Head of caudate nucleus (tissue), 42 donors: ENCODE measurements at regions of chr1 and their contacts with region 1.

Region 1: GRCh38 chr1:113811888-113812660 is at the start of gene RSBN1:
- DNase-seq: peak; percentile 97 to 100 (median 99)

Region 2: GRCh38 chr1:113759333-113760101 is 52.6 kb before region 1 on chr1 and contains the start of gene PHTF1:
- intact Hi-C with region 1: loop called (anchors 5 kb)
- DNase-seq: peak; percentile 37 to 82 (median 60)

Region 3: DNA sequence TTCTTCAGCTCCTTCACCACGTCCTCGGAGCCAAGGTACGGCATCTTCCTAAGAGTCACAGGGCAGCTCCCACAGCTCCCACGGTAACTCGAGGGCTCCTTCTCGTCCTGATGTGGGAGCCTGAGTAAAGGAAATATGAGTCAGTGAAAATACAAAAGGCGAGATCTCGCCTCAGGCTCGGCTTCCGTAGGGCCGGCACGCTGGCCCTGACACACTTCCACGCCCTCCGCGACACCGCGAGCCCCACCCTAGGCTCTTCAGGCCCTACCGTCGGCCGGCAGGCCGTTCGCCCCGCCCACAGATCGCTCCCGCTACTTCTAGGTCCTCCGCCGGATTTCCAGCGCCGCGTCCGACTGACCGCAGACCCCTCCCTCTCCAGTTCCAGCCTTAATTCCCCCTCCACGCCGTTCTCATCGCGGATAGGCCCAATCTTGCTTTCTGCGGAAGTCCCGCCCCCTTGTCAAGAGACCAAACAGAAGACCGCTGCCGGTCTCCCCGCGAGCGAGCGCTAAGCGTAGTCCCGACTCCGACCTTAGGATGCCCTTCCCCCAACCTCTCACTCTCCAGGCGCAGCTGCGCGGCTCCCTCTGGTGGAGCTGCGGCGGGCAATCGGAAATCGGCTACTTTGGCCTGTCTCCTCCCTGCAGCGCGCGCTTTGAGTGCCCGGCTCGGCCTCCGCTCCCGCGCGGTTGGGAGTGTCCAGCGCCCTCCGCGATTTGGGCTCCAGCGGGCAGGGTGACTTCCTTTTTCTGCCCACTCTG is 92.8 kb after region 1 on chr1 and contains the starts of genes AP4B1 and DCLRE1B:
- intact Hi-C with region 1: loop called (anchors 5 kb)
- DNase-seq: peak; percentile 93 to 99 (median 98)